Left lung (tissue), 14 donors: ENCODE measurements at regions of chr2 and their contacts with region 1.

Region 1: GRCh38 chr2:189633392-189633811 is 27.9 kb upstream of the ASNSD1 start:
- DNase-seq: peak in 1 of 4 donors; percentile 37
- ATAC-seq: peak; percentile 65
- H3K4me3 ChIP-seq: no peak overlapping the region
- H3K27ac ChIP-seq: no peak overlapping the region
- H3K4me1 ChIP-seq: no peaks in the 10 kb centered on the region
- H3K27me3 ChIP-seq: no peaks in the 10 kb centered on the region
- CTCF ChIP-seq: peak in 1 of 2 donors; percentile 15

Region 2: DNA sequence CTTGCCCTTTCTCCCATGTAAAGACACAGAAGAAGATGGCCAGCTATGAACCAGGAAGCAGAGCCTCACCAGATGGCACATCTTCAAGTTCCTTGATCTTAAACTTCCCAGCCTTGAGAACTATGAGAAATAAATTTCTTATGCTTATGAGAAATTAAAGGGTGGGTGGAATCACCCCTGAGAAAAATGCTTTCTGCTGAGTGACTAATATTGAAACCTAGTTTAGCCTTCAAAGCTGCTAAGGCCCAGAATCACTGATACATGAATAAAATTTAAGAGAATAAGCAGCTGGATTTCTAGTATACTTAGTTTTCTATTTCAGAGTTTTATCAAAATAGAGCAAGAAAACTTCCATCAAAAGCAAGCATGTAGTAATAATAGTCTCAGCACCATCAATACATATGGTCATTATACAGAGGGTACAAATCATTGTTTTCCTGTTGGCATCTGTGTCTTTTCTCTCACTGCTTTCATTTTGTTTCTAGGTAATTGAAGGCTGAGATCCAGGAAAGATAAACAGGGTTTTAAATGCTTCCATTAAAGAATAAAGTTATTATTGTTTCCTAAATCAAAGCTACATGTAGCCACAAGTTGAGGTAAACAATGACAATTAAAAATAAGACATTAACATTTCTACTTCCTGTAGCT is 400.5 kb before region 1 on chr2:
- intact Hi-C with region 1: no loop called
- DNase-seq: no peak
- ATAC-seq: no peak
- H3K4me3 ChIP-seq: no peak overlapping the region
- H3K27ac ChIP-seq: no peak overlapping the region
- H3K4me1 ChIP-seq: no peaks in the 10 kb centered on the region
- H3K27me3 ChIP-seq: no peaks in the 10 kb centered on the region
- CTCF ChIP-seq: no peak

Region 3: GRCh38 chr2:189477756-189478155 is 155.6 kb before region 1 on chr2:
- intact Hi-C with region 1: loop called in 1 of 2 experiments (anchors 10 kb)
- DNase-seq: no peak
- ATAC-seq: no peak
- H3K4me3 ChIP-seq: no peak overlapping the region
- H3K27ac ChIP-seq: no peak overlapping the region
- H3K4me1 ChIP-seq: no peaks in the 10 kb centered on the region
- H3K27me3 ChIP-seq: no peaks in the 10 kb centered on the region
- CTCF ChIP-seq: no peak

Region 4: GRCh38 chr2:189719571-189719970 is 86.2 kb after region 1 on chr2:
- intact Hi-C with region 1: no loop called
- DNase-seq: no peak
- ATAC-seq: no peak
- H3K4me3 ChIP-seq: no peak overlapping the region
- H3K27ac ChIP-seq: no peak overlapping the region
- H3K4me1 ChIP-seq: no peaks in the 10 kb centered on the region
- H3K27me3 ChIP-seq: no peaks in the 10 kb centered on the region
- CTCF ChIP-seq: no peak